Calu3 (cell line): ENCODE measurements at regions of chr3 and their contacts with region 1.

Region 1: GRCh38 chr3:128383316-128384235 is 83.1 kb downstream of the DNAJB8 start:
- DNase-seq: peak; percentile 99
- H3K4me3 Mint-ChIP-seq: peak overlapping the region; percentile 10
- H3K27ac Mint-ChIP-seq: peak overlapping the region; percentile 64
- H3K4me1 Mint-ChIP-seq: peaks cover 39% of the 10 kb centered on the region
- H3K27me3 Mint-ChIP-seq: no peaks in the 10 kb centered on the region
- CTCF ChIP-seq: no peak

Region 2: DNA sequence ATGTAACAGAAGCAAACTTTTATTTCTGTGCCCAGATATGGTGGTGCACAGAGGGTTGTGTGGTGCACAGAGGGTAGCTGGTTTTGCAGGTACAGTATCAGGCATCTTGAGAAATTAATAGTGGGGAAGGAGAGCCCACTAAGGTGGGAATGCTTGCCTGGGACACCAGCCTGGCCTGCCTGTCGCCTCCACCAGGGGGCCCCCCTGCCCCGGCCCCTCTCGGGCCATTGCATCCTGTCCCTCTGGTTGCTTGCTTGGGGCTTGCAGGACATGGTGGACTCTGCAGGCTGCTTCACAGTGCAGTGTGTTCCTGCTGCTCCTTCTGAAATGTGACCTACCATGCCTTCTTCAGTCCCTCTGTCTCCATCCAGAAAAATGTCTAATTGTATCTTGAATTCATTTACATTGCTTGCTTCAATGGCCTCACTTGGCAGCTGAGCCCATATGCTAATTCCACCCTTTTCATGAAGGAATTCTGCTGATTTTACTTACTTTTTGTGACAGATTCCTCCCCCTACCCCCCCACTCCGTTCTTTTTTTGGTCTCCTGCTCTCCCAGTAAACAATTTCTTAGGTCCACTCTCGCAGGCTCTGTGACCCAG is 156.7 kb before region 1 on chr3:
- CTCF ChIA-PET with region 1: interaction called, 3 read pairs
- intact Hi-C with region 1: loop called (anchors 10 kb)
- DNase-seq: peak; percentile 83
- H3K4me3 Mint-ChIP-seq: no peak overlapping the region
- H3K27ac Mint-ChIP-seq: no peak overlapping the region
- H3K4me1 Mint-ChIP-seq: no peaks in the 10 kb centered on the region
- H3K27me3 Mint-ChIP-seq: no peaks in the 10 kb centered on the region
- CTCF ChIP-seq: peak; percentile 93